ENCODE measurements at regions of chr1 and their contacts with region 1.

Region 1: GRCh38 chr1:201792534-201793305 is 36.2 kb upstream of the IPO9 start:
- DNase-seq: peak; percentile 54 to 75 (median 69)
- H3K4me3 ChIP-seq: no peak overlapping the region
- H3K27ac ChIP-seq: no peak overlapping the region
- H3K4me1 ChIP-seq: peaks cover 2 to 33% (median 26%) of the 10 kb centered on the region in 4 experiments
- H3K27me3 ChIP-seq: no peaks in the 10 kb centered on the region

Region 2: DNA sequence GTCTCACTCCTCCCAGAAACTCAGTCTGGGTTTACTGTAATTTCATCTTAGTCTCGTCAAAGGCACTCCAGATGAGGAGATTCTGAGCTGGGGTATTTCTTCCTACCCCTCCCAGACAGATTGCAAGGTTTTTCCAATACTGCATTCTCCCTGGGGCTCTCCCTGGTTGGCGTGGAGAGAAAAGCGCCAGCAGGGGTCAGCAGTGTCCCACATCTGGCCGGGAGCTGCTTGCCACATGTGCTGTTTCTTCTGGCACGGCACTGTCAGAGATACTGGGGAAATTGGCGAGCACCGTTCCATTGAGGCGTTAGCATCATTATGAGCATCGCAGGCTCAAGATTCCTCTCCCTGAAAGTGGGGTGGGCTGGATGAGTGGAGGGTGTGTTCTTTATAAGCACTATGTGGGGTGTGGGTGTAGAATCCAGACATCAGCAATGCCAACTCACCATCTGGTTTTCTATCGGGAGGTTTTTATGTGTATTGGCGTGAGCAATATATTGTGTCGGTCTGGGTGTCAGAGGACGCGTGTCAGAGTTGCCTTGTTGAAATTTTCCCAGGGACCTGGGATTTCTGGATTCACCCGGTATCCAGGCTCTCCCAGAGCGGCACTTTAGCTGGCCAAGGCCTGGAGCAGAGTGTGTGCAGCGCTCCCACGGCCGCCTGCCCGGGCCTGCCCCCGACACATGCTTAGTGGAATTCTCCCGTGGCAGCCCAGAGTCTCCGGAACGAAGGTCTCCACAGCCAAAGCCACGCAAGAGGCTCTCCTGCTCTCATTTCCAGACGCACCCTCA is 261.8 kb before region 1 on chr1:
- CTCF ChIA-PET with region 1: interaction called, 21 read pairs
- POLR2A ChIA-PET with region 1: no interaction called
- DNase-seq: peak; percentile 77 to 83 (median 79)
- H3K4me3 ChIP-seq: peak overlapping the region in 1 of 7 experiments; percentile 14
- H3K27ac ChIP-seq: no peak overlapping the region
- H3K4me1 ChIP-seq: peaks cover 0 to 38% (median 29%) of the 10 kb centered on the region in 4 experiments
- H3K27me3 ChIP-seq: no peaks in the 10 kb centered on the region

Region 3: GRCh38 chr1:201559679-201560162 is 233.0 kb before region 1 on chr1:
- CTCF ChIA-PET with region 1: interaction called, 91 read pairs
- POLR2A ChIA-PET with region 1: interaction called, 3 read pairs
- DNase-seq: peak; percentile 84 to 91 (median 89)
- H3K4me3 ChIP-seq: no peak overlapping the region
- H3K27ac ChIP-seq: no peak overlapping the region
- H3K4me1 ChIP-seq: peaks cover 3 to 45% (median 34%) of the 10 kb centered on the region in 4 experiments
- H3K27me3 ChIP-seq: no peaks in the 10 kb centered on the region

Region 4: GRCh38 chr1:201719812-201720521 is 72.8 kb before region 1 on chr1:
- CTCF ChIA-PET with region 1: interaction called, 350 read pairs
- POLR2A ChIA-PET with region 1: no interaction called
- DNase-seq: no peak
- H3K4me3 ChIP-seq: no peak overlapping the region
- H3K27ac ChIP-seq: no peak overlapping the region
- H3K4me1 ChIP-seq: peaks cover 5 to 21% (median 13%) of the 10 kb centered on the region in 4 experiments
- H3K27me3 ChIP-seq: no peaks in the 10 kb centered on the region

Region 5: DNA sequence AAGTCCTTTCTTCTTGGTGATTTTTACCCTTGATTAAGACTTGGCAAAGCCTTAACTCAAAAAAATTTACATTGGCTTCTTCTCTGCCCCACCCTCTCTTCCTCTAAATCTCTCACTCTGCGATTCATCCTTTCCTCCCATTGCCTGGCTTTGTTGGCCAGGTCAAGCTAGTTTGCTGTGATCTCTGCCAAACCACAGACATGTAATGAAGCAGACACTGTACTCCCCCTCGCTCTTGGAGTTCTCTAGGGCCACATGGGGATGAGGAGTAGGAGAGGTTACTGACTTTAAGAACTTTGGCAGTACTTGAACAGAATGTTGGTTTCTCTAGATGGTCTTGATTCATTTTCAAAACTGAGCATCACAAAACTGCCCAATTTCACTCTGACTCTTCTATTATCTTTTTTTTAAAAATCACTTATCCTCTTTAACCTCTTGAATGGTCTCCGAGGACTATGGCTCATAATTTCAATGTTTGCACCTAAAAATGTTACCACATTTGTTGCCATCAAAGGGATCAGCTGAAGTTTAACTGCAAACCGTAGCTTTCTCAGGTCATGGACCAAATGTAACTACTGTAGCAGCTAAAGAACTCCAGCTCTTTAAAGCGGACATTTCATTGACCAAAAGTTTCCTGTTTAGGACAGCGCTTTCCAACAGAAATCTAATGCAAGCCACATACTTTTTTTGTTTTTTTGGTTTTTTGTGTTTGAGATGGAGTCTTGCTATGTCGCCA is 26.4 kb before region 1 on chr1:
- CTCF ChIA-PET with region 1: interaction called, 12 read pairs
- POLR2A ChIA-PET with region 1: no interaction called
- DNase-seq: no peak
- H3K4me3 ChIP-seq: no peak overlapping the region
- H3K27ac ChIP-seq: no peak overlapping the region
- H3K4me1 ChIP-seq: no peaks in the 10 kb centered on the region
- H3K27me3 ChIP-seq: no peaks in the 10 kb centered on the region

Region 6: GRCh38 chr1:201778279-201779065 is 14.2 kb before region 1 on chr1:
- CTCF ChIA-PET with region 1: interaction called, 32 read pairs
- POLR2A ChIA-PET with region 1: no interaction called
- DNase-seq: no peak
- H3K4me3 ChIP-seq: no peak overlapping the region
- H3K27ac ChIP-seq: no peak overlapping the region
- H3K4me1 ChIP-seq: no peaks in the 10 kb centered on the region
- H3K27me3 ChIP-seq: no peaks in the 10 kb centered on the region

Region 7: GRCh38 chr1:201838381-201838780 is 45.7 kb after region 1 on chr1:
- CTCF ChIA-PET with region 1: no interaction called
- POLR2A ChIA-PET with region 1: no interaction called
- DNase-seq: no peak
- H3K4me3 ChIP-seq: no peak overlapping the region
- H3K27ac ChIP-seq: no peak overlapping the region
- H3K4me1 ChIP-seq: peaks cover 3 to 16% (median 8%) of the 10 kb centered on the region in 4 experiments
- H3K27me3 ChIP-seq: no peaks in the 10 kb centered on the region

Region 8: DNA sequence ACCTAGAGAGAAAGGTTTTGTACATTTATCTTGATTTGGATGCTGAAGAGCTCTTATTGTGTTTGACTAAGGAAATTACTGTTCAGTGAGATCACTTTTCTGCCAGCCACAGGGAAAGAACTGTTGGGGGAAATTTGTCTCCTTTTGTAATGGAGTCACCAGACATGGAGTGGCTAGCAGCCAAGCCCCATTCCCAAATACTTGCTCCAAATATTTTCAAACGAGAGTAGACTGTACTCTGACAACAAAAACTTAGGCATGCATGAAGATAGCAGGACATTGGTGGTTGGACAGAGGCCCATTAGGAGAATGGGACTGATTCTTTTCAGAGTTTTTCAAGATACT is 57.3 kb after region 1 on chr1:
- CTCF ChIA-PET with region 1: no interaction called
- POLR2A ChIA-PET with region 1: no interaction called
- DNase-seq: no peak
- H3K4me3 ChIP-seq: no peak overlapping the region
- H3K27ac ChIP-seq: no peak overlapping the region
- H3K4me1 ChIP-seq: no peaks in the 10 kb centered on the region
- H3K27me3 ChIP-seq: no peaks in the 10 kb centered on the region